Sigmoid colon (tissue), 7 donors: ENCODE measurements at regions of chr18 and their contacts with region 1.

Region 1: GRCh38 chr18:3217948-3218647 is 1.7 kb downstream of the MYOM1 start:
- DNase-seq: no peak
- H3K4me3 ChIP-seq: peak overlapping the region in 3 of 4 donors; percentile 32 to 48 (median 38)
- H3K27ac ChIP-seq: peak overlapping the region; percentile 76 to 85 (median 82)
- H3K4me1 ChIP-seq: peaks cover 0 to 26% (median 8%) of the 10 kb centered on the region in 4 donors
- H3K27me3 ChIP-seq: no peaks in the 10 kb centered on the region
- CTCF ChIP-seq: no peak
- EP300 ChIP-seq: no peak
- POLR2A ChIP-seq: no peak

Region 2: GRCh38 chr18:3177902-3178687 is 40.0 kb before region 1 on chr18:
- intact Hi-C with region 1: loop called (anchors 5 kb)
- DNase-seq: peak; percentile 80
- H3K4me3 ChIP-seq: no peak overlapping the region
- H3K27ac ChIP-seq: peak overlapping the region in 2 of 4 donors; percentile 18 to 28
- H3K4me1 ChIP-seq: peaks cover 0 to 12% (median 5%) of the 10 kb centered on the region in 4 donors
- H3K27me3 ChIP-seq: no peaks in the 10 kb centered on the region
- CTCF ChIP-seq: no peak
- EP300 ChIP-seq: peak in 2 of 4 donors; percentile 13 to 43
- POLR2A ChIP-seq: no peak

Region 3: GRCh38 chr18:3261371-3262246 is 43.5 kb after region 1 on chr18 and contains the start of gene MYL12B:
- intact Hi-C with region 1: loop called (anchors 5 kb)
- DNase-seq: peak; percentile 86
- H3K4me3 ChIP-seq: peak within 1 kb of the TSS; percentile 72 to 99 (median 81)
- H3K27ac ChIP-seq: peak within 1 kb of the TSS; percentile 88 to 94 (median 90)
- H3K4me1 ChIP-seq: peaks cover 0 to 60% (median 55%) of the 10 kb centered on the region in 4 donors
- H3K27me3 ChIP-seq: no peaks in the 10 kb centered on the region
- CTCF ChIP-seq: no peak
- EP300 ChIP-seq: no peak
- POLR2A ChIP-seq: peak; percentile 76 to 83
- total RNA-seq, gene MYL12B: 155 to 227 (median 181) TPM

Region 4: DNA sequence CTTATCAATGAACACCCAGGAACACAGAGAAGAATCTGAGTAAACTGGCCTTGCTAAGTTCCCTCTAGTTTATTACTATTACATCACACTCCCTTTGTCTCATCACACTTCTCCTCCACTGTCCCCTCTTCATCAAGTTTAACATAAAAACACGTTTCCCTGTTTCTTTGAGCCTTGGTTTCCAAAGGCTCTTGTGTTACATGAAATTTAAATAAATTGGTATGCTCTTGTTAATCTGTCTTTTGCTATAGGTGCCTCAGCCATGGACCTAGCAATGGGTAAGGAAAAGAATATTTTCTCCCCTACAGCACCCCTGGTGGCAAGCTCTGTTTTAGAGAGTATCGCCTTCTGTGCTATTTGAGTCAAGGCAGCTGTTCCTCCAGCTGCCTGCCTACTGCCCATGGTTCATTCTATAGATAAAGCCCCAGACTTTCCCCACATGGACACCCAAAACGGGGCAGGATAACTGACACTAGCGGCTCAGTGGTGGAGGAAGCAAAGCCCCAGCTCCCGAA is 263.7 kb after region 1 on chr18:
- intact Hi-C with region 1: no loop called
- DNase-seq: no peak
- H3K4me3 ChIP-seq: no peak overlapping the region
- H3K27ac ChIP-seq: no peak overlapping the region
- H3K4me1 ChIP-seq: no peaks in the 10 kb centered on the region
- H3K27me3 ChIP-seq: no peaks in the 10 kb centered on the region
- CTCF ChIP-seq: peak in 1 of 4 experiments; percentile 18
- EP300 ChIP-seq: no peak
- POLR2A ChIP-seq: no peak

Region 5: GRCh38 chr18:3513481-3513880 is 295.4 kb after region 1 on chr18:
- intact Hi-C with region 1: no loop called
- DNase-seq: no peak
- H3K4me3 ChIP-seq: no peak overlapping the region
- H3K27ac ChIP-seq: no peak overlapping the region
- H3K4me1 ChIP-seq: no peaks in the 10 kb centered on the region
- H3K27me3 ChIP-seq: no peaks in the 10 kb centered on the region
- CTCF ChIP-seq: no peak
- EP300 ChIP-seq: no peak
- POLR2A ChIP-seq: no peak